Posterior cingulate gyrus (tissue), 11 donors: ENCODE measurements at regions of chr17 and their contacts with region 1.

Region 1: DNA sequence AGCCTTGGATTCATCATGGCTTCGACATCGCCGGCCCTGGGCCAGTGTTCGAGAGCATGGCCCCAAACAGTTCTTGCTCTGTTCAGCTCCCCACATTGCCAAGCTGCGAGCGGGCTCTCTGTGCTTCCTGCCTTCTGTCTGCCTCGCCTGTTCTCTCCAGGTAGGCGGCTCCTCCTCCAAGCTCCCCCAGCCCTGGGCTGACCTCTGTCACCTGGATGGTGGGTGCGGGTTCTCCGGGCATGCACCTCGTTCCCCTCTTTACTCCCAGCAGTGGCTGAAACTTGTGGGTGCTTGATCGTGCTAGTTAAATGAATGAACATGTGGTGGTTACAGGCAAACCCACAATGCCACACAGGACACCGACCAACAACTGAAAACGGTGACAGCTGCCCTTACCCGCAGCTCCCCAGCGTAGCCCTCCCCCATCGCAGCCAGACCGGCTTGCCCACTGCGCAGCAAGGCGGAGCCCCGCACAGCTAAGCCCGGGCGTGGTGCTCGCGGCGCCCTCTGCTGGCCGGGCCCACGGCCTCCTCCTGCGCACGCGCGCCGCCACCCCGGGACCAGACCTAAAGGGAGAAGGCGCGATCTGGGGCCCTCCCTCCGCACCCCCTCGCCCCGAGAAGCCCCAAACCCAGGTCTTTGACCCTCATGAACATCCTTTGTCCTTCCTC is 23.0 kb upstream of the EIF1 start:
- DNase-seq: peak; percentile 79 to 99 (median 88)

Region 2: GRCh38 chr17:40647624-40648383 is 1017.9 kb before region 1 on chr17 and contains the start of gene SMARCE1:
- intact Hi-C with region 1: loop called (anchors 5 kb)
- DNase-seq: peak; percentile 47 to 93 (median 62)

Region 3: DNA sequence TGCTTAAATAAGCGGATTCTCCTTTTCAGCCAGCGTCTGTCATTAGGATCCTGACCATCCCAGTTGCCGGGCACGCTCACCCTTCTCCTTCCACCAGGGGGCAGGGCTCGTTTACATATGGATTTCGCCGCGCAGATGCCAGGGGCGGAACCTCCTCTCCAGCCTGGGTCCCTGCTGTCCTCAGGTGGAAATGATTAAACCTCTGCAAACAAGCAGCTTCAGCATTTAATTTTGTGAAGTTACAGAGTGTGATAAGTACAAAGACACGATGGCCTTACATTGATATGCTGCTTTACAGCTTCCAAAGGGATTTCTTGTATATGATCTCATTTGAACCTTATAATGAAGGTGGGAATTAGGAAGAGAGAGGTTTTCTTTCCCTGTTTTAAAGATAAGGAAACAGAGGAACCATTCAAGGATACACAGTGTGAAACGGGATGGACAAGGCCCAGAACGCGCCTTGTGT is 862.1 kb before region 1 on chr17:
- intact Hi-C with region 1: loop called (anchors 5 kb)
- DNase-seq: peak; percentile 25 to 94 (median 66)

Region 4: GRCh38 chr17:40857535-40857934 is 808.2 kb before region 1 on chr17:
- intact Hi-C with region 1: loop called (anchors 5 kb)
- DNase-seq: no peak

Region 5: GRCh38 chr17:40909351-40909750 is 756.4 kb before region 1 on chr17:
- intact Hi-C with region 1: loop called (anchors 1 kb)
- DNase-seq: peak; percentile 41 to 96 (median 75)

Region 6: DNA sequence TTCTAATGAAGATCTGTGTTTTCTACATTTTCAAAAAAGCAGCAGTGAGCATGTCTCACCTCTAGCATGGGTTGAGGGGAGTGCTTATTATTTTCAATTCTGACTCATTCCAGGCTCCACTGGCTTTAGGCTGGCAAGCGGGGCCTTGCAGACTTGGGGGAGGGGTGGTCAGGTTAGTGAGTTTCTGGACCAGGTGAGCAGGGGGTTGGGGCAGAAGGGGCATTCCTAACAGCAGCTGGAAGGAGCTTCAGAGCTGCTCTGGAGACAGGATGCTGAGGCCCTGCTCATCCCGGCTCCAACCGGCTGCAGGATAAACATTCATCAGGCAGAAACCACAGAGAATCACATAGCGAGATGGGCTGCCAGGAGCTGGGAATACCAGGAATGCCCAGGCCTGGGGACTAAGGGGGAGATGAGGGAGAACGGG is 127.1 kb before region 1 on chr17:
- intact Hi-C with region 1: no loop called
- DNase-seq: peak in 2 of 10 donors; percentile 8 to 13

Region 7: DNA sequence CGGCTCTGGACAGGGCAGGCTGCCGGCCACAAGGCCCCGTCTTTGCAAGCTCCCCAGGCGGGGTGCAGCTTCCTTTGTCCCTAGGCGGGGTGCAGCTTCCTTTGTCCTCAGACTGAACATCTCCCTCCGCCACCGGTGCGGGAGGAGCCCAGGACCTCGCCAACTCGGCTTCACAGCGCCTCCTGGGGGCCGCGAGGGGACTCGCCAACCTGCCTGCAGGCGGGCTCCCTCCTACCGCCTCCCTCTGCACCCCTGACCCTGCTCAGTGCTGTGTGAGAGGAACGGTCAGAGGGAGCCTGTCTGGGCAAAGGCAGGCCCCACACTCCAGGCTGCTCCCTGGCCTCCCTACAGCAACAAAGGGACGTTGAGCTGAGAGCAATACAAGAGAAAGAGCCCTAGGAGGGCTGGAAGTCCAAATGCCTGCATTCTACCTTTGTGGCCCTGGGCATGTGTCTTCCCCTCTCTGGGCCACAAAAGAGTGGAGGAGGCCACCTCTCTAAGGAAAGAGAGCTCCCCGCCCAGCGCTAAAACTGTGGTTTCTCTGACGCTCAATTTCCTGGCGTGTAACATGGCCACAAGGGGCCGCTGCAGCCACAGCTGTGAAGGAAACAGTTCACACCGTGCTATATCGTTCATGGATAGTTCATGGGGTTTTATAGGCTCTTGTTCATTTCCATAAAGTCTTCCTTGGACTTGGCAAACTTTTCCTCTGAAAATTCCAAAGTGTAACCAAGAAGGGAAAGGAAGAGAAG is 116.7 kb before region 1 on chr17:
- intact Hi-C with region 1: loop called (anchors 1 kb)
- DNase-seq: peak; percentile 59 to 95 (median 80)

Region 8: DNA sequence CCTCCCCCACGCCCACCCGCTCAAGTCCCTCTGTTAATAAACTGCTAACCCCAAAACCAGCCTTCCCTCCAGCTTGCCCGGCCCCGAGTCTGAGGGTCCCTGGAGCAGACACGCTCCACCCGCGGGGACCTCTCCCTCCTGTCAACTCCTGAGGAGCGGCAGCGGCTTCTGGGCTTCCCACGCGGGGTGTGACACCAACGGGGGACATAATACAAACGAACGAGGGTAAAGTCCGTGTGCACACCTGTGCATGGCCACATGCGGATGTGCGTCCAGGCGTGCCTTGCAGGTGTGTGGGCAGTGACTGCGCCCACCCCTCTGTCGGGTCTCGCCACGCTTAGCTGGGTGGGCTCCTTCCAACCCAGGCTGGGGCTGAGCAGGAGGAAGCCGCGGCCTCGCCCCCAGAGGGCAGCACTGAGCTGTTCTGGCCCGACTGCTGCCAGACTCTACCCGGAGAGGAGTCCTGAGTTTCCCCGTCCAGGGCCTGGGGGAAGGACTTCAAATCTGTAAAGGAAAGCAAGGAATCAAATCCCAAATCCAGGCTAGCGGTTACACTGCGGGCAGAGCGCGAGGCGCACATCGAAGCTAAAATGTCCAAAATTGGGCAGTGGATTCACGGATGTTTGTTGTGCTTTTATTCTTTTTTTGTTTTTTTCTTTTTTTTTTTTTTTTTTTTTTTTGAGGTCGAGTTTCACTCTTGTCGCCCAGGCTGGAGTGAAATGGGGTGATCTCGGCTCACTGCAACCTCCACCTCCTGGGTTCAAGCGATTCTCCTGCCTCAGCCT is 17.1 kb before region 1 on chr17:
- intact Hi-C with region 1: loop called (anchors 2 kb)
- DNase-seq: peak; percentile 70 to 97 (median 86)